Dendritic cell treated with granulocyte-macrophage colony-stimulating factor and Interleukin-4, amounts not matched to agents 40 ng/mL and 50 ng/mL, for 4 days (primary cell): ENCODE measurements at regions of chr1 and their contacts with region 1.

Region 1: GRCh38 chr1:92298573-92299476 is at the starts of genes GLMN and RPAP2:
- H3K4me3 Mint-ChIP-seq: peak within 1 kb of the TSS; percentile 97
- H3K27ac Mint-ChIP-seq: peak within 1 kb of the TSS; percentile 97
- H3K4me1 Mint-ChIP-seq: peaks cover 27% of the 10 kb centered on the region
- H3K27me3 Mint-ChIP-seq: no peaks in the 10 kb centered on the region

Region 2: DNA sequence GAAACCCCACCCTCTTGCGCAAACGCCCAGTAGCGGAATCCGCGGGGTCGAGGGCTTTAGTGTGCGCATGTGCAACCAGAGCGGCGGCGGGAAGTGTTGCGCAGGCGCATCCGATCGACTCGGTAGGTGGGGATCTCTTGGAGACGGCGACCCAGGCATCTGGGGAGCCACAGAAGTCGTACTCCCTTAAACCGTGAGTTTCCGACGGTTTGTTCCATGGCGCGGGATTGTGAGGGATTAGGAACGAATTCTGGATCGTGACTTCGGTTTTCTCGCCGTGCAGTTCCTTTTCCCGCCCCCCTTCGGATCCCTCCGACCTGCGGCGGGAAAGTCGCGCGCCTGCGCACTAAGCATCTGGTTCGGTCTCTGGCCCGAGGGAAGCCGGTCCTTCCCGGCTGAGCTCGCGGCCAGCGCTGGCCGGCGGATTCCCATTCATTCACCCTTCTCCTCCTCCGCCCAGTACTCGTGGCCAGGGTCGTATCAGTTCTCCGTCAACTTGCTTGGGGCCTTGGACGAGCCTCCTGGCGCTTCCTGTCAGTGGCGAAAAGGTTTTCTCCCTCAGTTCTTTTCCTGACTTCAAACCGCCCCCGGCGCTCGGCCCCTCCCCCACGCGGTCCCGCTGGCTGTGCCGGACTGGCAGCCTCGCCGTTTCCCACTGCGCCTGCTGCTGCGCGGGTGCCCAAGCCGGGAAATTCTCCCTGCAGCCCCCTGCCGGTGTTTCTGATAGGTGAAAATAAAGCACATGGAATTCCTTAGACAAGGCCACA is 797.9 kb before region 1 on chr1 and contains the start of gene CDC7:
- intact Hi-C with region 1: loop called (anchors 10 kb)
- H3K4me3 Mint-ChIP-seq: no peak within 1 kb of the TSS
- H3K27ac Mint-ChIP-seq: no peak within 1 kb of the TSS
- H3K4me1 Mint-ChIP-seq: peaks cover 16% of the 10 kb centered on the region
- H3K27me3 Mint-ChIP-seq: no peaks in the 10 kb centered on the region

Region 3: GRCh38 chr1:92080128-92080985 is 218.5 kb before region 1 on chr1 and contains the start of gene BTBD8:
- intact Hi-C with region 1: loop called (anchors 5 kb)
- H3K4me3 Mint-ChIP-seq: peak within 1 kb of the TSS; percentile 96
- H3K27ac Mint-ChIP-seq: peak within 1 kb of the TSS; percentile 84
- H3K4me1 Mint-ChIP-seq: peaks cover 8% of the 10 kb centered on the region
- H3K27me3 Mint-ChIP-seq: no peaks in the 10 kb centered on the region

Region 4: DNA sequence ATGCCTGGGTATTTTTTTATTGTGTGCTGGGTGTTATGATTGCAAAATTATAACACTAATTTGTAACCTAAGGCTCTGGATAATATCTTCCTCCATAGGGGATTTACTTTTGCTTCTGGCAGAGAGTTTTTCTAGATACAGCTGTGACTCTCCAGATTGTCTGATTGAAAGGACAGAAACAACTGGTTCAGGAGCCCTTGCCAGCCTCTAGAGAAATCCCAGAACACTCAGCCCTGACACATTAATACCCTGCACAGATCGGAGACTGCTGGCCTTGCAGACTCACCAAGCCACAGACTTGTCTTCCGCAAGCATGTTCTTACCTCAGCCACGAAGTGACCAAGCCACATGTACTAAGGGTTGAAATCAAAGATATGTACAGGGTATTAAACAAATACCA is 70.4 kb before region 1 on chr1:
- intact Hi-C with region 1: no loop called
- H3K4me3 Mint-ChIP-seq: no peak overlapping the region
- H3K27ac Mint-ChIP-seq: no peak overlapping the region
- H3K4me1 Mint-ChIP-seq: no peaks in the 10 kb centered on the region
- H3K27me3 Mint-ChIP-seq: no peaks in the 10 kb centered on the region

Region 5: GRCh38 chr1:92346866-92347640 is 48.2 kb after region 1 on chr1:
- intact Hi-C with region 1: no loop called
- H3K4me3 Mint-ChIP-seq: no peak overlapping the region
- H3K27ac Mint-ChIP-seq: no peak overlapping the region
- H3K4me1 Mint-ChIP-seq: peaks cover 7% of the 10 kb centered on the region
- H3K27me3 Mint-ChIP-seq: no peaks in the 10 kb centered on the region

Region 6: GRCh38 chr1:92461364-92462097 is 162.7 kb after region 1 on chr1:
- intact Hi-C with region 1: loop called (anchors 5 kb)
- H3K4me3 Mint-ChIP-seq: no peak overlapping the region
- H3K27ac Mint-ChIP-seq: peak overlapping the region; percentile 92
- H3K4me1 Mint-ChIP-seq: peaks cover 51% of the 10 kb centered on the region
- H3K27me3 Mint-ChIP-seq: no peaks in the 10 kb centered on the region